ENCODE measurements at regions of chr2 and their contacts with region 1.

Region 1: GRCh38 chr2:241702132-241703031 is 543 bp downstream of the ING5 start:
- DNase-seq: peak; percentile 82
- H3K4me3 Mint-ChIP-seq: peak overlapping the region; percentile 78
- H3K27ac Mint-ChIP-seq: peak overlapping the region; percentile 53
- H3K4me1 Mint-ChIP-seq: peaks cover 20% of the 10 kb centered on the region
- H3K27me3 Mint-ChIP-seq: no peaks in the 10 kb centered on the region

Region 2: DNA sequence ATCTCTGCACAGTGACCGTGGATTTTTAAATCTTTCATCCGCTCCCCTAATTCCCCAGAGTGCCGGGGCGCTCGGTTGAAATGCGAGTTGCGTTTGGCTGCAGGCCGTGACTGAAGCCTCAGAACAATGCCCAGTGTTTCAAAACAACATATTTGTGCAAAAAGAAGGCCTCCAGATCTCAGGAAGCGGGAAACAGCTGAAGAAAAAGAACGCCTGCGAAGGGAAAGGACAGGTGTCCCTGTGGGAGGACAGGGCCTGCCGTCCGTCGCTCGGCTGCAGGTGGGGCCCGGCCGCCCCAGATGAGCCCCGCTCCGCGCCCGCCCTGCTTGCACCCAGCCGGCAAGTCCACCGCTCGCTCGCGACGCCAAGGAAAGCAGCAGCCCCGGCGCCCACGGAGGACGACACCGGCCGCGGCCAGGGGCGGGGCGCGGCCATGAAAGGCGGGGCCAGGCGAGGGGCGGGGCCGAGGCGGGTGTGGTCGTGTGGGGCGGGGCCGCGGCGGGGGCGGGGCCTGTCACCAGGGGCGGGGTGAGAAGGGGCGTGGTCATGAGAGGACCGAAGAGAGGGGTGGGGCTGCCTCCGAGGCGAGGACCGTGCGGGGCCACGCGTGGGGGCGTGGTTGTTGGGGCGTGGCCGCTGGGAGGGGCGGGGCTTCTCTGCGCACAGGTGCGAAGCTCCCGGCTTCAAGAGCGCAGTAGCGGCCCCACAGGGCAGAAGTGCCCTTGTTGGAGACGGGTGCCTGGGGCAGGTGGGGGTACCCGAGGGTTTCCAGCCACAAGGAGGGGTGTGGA is 161.4 kb before region 1 on chr2:
- intact Hi-C with region 1: loop called (anchors 1 kb)
- DNase-seq: peak; percentile 59
- H3K4me3 Mint-ChIP-seq: peak overlapping the region; percentile 70
- H3K27ac Mint-ChIP-seq: no peak overlapping the region
- H3K4me1 Mint-ChIP-seq: no peaks in the 10 kb centered on the region
- H3K27me3 Mint-ChIP-seq: peaks cover 9% of the 10 kb centered on the region

Region 3: DNA sequence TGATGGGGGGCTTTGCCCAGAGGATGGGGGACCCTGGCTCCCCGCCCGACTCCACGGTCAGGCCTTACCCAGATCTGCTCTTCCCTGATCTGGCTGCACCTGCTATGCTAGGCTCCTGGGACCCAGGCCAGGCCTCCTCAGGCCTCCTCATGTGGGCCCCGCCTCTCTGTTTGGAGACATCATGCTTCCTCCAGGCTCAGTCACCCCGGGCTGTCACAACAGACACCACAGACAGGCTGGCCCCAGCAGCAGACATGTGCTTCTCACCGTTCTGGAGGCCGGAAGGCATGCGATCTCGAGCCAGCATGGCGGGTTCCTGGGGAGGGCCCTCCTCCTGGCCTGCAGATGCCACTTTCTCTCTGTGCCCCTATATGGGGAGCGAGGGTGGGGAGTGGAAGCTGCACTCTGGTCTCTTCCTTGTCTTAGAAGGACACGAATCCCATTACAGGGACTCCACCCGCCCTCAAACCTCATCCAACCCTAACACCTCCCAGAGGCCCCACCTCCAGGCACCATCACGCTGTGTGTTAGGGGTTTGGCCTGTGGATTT is 95.8 kb after region 1 on chr2:
- intact Hi-C with region 1: no loop called
- DNase-seq: peak; percentile 0
- H3K4me3 Mint-ChIP-seq: no peak overlapping the region
- H3K27ac Mint-ChIP-seq: no peak overlapping the region
- H3K4me1 Mint-ChIP-seq: peaks cover under 1% of the 10 kb centered on the region
- H3K27me3 Mint-ChIP-seq: no peaks in the 10 kb centered on the region

Measured in activated T-helper 1 cell treated with anti-CD3 and anti-CD28 coated beads, Interleukin-12 subunit alpha, Interleukin-12 subunit beta, Interleukin-2, Interleukin-4 antibody, amounts not matched to agents 30 ng/mL and 10 ng/mL and 1 ng/mL, durations not matched to agents 14 hours and 24 hours and 36 hours (primary cell).